Activated CD8-positive, alpha-beta T cell treated with anti-CD3 and anti-CD28 coated beads, Interleukin-2, amount 10 ng/mL, durations not matched to agents 7 days and 5 days (primary cell): ENCODE measurements at regions of chr1 and their contacts with region 1.

Region 1: DNA sequence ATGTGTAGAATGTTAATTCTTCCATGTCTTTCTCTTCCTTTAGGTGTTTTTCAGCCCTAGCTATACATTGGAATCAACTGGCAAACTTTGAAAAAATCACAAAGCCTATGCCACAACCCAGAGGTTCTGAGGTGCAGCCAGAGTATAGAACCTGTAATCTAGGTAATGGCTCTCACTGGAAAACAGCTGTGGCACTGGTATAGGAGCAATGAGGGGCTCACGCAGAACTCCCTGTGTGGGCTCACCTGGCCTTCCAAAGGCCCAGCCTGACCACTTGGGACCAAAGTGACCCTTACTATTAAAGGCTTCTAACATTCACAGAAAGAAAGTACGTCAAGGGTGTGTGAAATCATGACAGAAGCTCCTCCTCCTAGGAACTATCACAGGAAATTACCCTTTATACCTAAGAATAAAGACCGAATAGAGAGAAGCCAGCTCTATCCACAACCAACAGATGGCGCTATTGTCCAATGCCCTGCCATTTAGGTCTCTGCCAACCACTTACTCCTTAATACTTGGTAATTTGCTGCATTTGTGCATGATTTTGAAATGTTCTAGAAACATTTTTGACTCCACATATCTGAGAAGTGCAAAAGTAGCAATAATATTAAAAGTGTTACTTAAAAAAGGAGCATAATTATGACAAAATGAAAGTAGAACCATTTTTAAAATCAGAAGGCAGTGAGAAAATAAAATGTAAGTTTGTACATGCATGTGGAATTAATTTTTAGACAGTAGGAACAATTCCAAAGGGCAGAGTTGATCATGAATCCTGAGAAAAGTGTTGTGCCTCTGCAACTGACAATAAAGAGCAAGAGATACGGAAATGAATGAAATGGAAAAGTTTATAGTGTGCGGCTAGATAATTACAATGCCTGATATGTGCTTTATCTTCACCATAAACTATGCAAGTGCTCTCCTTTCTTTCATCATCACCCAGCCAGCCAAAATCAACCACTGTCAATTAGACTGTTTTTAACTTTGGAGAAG is 93.1 kb upstream of the HAO2 start:
- DNase-seq: peak; percentile 65
- ATAC-seq: peak; percentile 60
- H3K4me3 Mint-ChIP-seq: no peak overlapping the region
- H3K27ac Mint-ChIP-seq: no peak overlapping the region
- H3K4me1 Mint-ChIP-seq: no peaks in the 10 kb centered on the region
- H3K27me3 Mint-ChIP-seq: peaks cover 18% of the 10 kb centered on the region

Region 2: DNA sequence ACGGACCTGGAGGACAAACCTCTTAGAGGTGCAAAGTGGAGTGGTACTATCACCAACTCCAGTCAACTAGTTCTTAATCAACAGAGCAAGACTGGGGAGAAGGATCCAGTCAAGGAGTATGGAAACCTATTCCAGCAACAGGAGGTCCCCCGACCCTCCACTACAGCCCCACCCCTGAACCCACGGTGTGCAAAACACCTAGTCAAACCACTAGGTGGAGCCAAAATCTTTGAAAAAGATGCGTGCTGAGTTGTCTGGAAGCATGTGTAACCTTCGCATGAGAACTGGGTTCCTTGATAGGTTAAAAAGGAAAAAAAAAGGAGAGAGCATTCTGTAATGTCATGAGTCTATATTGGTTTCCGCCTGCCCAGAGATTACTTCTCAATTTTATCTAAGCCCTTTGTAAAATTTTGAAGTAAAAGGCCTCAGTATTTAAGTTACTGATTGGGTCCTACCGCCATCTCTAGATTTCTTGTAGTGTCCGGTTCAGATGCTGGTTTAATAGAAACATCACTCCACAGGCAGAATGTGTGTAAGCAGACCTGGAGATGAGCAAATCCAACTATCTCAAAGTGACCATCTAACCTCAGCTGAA is 11.2 kb after region 1 on chr1:
- CTCF ChIA-PET with region 1: interaction called, 18 read pairs
- POLR2A ChIA-PET with region 1: no interaction called
- DNase-seq: peak; percentile 48
- ATAC-seq: peak; percentile 58
- H3K4me3 Mint-ChIP-seq: no peak overlapping the region
- H3K27ac Mint-ChIP-seq: no peak overlapping the region
- H3K4me1 Mint-ChIP-seq: no peaks in the 10 kb centered on the region
- H3K27me3 Mint-ChIP-seq: peaks cover 29% of the 10 kb centered on the region

Region 3: GRCh38 chr1:119294722-119295121 is 19.3 kb after region 1 on chr1:
- CTCF ChIA-PET with region 1: interaction called, 11 read pairs
- POLR2A ChIA-PET with region 1: no interaction called
- DNase-seq: peak; percentile 24
- ATAC-seq: peak; percentile 82
- H3K4me3 Mint-ChIP-seq: no peak overlapping the region
- H3K27ac Mint-ChIP-seq: no peak overlapping the region
- H3K4me1 Mint-ChIP-seq: peaks cover 13% of the 10 kb centered on the region
- H3K27me3 Mint-ChIP-seq: peaks cover 21% of the 10 kb centered on the region

Region 4: GRCh38 chr1:119323216-119323982 is 48.0 kb after region 1 on chr1:
- CTCF ChIA-PET with region 1: interaction called, 14 read pairs
- POLR2A ChIA-PET with region 1: no interaction called
- DNase-seq: peak; percentile 67
- ATAC-seq: peak; percentile 75
- H3K4me3 Mint-ChIP-seq: no peak overlapping the region
- H3K27ac Mint-ChIP-seq: no peak overlapping the region
- H3K4me1 Mint-ChIP-seq: peaks cover 37% of the 10 kb centered on the region
- H3K27me3 Mint-ChIP-seq: peaks cover 5% of the 10 kb centered on the region

Region 5: GRCh38 chr1:119367427-119368124 is 92.1 kb after region 1 on chr1:
- CTCF ChIA-PET with region 1: interaction called, 13 read pairs
- POLR2A ChIA-PET with region 1: no interaction called
- DNase-seq: no peak
- ATAC-seq: no peak
- H3K4me3 Mint-ChIP-seq: no peak overlapping the region
- H3K27ac Mint-ChIP-seq: no peak overlapping the region
- H3K4me1 Mint-ChIP-seq: no peaks in the 10 kb centered on the region
- H3K27me3 Mint-ChIP-seq: peaks cover 19% of the 10 kb centered on the region